ENCODE measurements at regions of chr6 and their contacts with region 1.

Region 1: DNA sequence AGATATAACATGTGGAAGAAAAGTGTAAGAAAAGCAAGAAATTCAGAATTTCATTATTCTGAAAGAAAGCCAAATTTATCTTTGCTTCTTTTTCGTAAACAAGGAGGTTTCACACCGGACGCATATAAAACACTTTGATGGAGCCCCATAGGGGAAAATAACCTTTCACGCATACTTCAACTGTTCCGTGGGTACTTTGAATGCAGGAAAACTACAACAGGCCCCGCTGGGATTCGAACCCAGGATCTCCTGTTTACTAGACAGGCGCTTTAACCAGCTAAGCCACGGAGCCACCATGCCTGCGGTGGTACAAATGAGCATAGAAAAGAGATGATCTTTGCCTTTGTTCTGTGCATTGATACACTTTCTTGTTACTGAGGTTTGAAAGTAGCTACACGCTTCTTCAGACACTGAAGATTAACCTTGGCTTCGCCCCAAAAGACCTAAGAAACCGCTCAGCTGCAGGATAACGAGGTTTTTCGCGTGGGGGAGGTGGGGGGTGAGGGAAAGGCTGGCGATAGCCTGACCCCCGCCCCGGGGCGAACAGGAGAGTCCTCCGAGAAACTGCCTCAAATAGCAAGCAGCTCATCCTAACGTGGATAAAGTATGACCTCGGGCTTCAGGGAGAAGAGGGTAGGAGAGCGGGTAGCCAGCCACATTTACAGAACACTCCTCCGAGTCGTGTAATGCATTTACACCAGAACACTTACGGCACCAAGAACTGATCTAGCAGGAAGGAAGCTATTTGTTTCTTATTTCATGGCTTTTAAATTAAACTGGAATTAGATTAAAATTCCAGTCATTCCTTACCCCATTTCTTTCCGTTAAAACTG is 5.3 kb upstream of the HMGN4 start:
- H3K4me3 ChIP-seq: peak overlapping the region; percentile 59
- H3K27ac ChIP-seq: peak overlapping the region; percentile 64
- H3K4me1 ChIP-seq: peaks cover 5% of the 10 kb centered on the region; the same call in 1 of the 2 replicates
- CTCF ChIP-seq: no peak

Region 2: GRCh38 chr6:26312501-26313390 is 220.2 kb before region 1 on chr6:
- CTCF ChIA-PET with region 1: no interaction called
- POLR2A ChIA-PET with region 1: no interaction called
- H3K4me3 ChIP-seq: peak overlapping the region; percentile 52
- H3K27ac ChIP-seq: no peak overlapping the region
- H3K4me1 ChIP-seq: no peaks in the 10 kb centered on the region
- CTCF ChIP-seq: no peak

Region 3: GRCh38 chr6:26457806-26458688 is 74.9 kb before region 1 on chr6 and contains the start of gene BTN2A1:
- CTCF ChIA-PET with region 1: no interaction called
- POLR2A ChIA-PET with region 1: no interaction called
- H3K4me3 ChIP-seq: peak within 1 kb of the TSS; percentile 72
- H3K27ac ChIP-seq: peak within 1 kb of the TSS; percentile 73
- H3K4me1 ChIP-seq: no peaks in the 10 kb centered on the region
- CTCF ChIP-seq: peak; percentile 71

Region 4: GRCh38 chr6:26520853-26521599 is 11.9 kb before region 1 on chr6:
- CTCF ChIA-PET with region 1: interaction called, 6 read pairs
- POLR2A ChIA-PET with region 1: interaction called, 13 read pairs
- H3K4me3 ChIP-seq: peak overlapping the region; percentile 62
- H3K27ac ChIP-seq: peak overlapping the region; percentile 98
- H3K4me1 ChIP-seq: 0 out of 2 replicates have a peak, but pooled peaks cover 2% of the 10 kb centered on the region
- CTCF ChIP-seq: no peak

Region 5: GRCh38 chr6:26588965-26589364 is 56.0 kb after region 1 on chr6:
- CTCF ChIA-PET with region 1: no interaction called
- POLR2A ChIA-PET with region 1: no interaction called
- H3K4me3 ChIP-seq: no peak overlapping the region
- H3K27ac ChIP-seq: no peak overlapping the region
- H3K4me1 ChIP-seq: no peaks in the 10 kb centered on the region
- CTCF ChIP-seq: no peak

Measured in HEK293 (cell line).